ENCODE measurements at regions of chr11 and their contacts with region 1.

Region 1: DNA sequence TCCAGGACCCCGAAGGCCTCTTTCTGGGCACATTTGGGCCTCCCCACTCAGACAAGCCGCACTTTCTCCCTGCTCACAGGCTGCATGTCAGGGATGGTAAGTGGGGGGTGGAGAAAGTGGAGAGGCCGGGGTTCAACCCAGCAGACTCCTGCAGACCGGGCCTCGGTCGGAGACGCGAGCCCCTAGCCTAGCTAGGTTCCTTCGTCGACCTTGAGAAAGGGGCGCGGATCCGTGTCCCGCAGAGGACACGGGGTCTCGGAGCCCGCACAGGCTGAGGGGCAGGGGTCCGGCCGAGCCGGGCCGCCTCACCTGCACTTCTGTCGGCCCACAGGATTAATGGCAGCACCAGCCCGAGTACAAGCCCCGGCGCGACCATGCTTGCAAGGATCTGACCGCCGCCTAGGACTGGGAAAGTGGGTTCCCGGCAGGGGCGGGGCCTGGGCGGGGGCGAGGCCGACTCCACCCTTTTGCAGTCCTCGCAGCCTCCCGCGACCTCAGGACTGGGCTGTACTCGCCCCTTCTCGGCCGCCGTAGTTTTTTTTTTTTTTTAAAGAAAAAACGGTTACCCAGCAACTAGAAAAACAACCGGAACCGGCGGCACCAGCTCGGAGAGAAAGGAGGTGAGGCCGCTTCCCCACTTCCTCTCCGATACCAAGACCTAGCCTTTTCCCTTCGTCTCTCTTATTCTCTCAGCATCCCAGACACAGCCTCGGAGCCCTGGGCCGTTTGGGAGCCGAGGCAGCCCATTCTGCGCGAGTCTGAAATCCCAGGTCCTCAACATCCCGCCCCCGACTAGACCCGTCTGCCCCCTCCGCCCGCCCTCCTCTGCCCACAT is at the starts of genes SIAE and SPA17:
- DNase-seq: peak; percentile 89 to 94 (median 92)
- H3K4me3 ChIP-seq: peak within 1 kb of the TSS; percentile 79
- H3K27ac ChIP-seq: peak within 1 kb of the TSS; percentile 13 to 67
- H3K4me1 ChIP-seq: peaks cover 1% of the 10 kb centered on the region
- H3K27me3 ChIP-seq: no peaks in the 10 kb centered on the region
- CTCF ChIP-seq: no peak
- EP300 ChIP-seq: peak; percentile 37
- POLR2A ChIP-seq: peak; percentile 51
- total RNA-seq, gene SIAE: 2.3 to 14.7 (median 8.1) TPM
- total RNA-seq, gene SPA17: 1.3 to 30.1 (median 3.0) TPM

Region 2: DNA sequence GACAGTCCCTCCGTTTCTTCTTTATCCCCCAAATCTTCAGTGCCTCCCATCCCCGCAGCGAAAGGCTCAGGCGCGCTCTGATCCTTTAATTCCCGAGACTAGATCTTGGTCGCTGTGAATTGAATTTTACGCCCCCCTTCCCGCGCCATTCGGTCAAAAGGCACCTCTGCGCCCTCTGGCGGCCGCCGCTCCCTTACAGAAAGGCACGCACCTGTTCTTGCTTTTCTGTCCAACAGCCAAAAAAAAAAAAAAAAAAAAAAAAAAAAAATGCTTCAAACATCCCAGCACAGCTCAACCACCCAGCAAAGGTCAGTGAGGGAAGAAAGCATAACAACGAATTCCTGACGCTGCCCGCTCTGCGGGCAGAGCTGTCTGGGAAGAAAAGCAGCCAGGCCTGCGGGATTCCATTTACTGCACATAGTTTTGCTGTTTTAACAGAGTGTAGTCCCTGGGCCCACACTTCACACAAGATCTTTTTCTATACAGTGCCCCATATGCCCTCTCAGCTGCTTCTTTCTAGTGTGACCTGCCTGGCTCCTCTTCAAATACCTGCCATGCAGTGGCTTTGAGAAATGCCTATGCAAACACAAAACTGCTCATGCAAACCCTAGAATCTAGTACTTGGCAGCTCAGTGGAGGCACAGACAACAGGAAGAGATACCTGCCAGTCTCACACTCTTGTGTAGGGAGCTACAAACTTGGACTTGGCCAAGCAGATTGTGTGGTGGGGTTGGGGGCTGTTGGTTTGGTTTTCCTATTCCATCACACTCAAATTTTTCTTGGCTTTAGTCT is 89.8 kb after region 1 on chr11:
- intact Hi-C with region 1: loop called in 3 of 4 experiments (anchors 2 to 5 kb)
- DNase-seq: peak; percentile 77 to 91 (median 86)
- H3K4me3 ChIP-seq: peak overlapping the region; percentile 41
- H3K27ac ChIP-seq: no peak overlapping the region
- H3K4me1 ChIP-seq: peaks cover 4% of the 10 kb centered on the region
- H3K27me3 ChIP-seq: peaks cover 7% of the 10 kb centered on the region
- CTCF ChIP-seq: peak; percentile 38 to 43 (median 40)
- EP300 ChIP-seq: no peak
- POLR2A ChIP-seq: no peak

Measured in ovary (tissue), 10 donors.